ENCODE measurements at regions of chr5 and their contacts with region 1.

Region 1: DNA sequence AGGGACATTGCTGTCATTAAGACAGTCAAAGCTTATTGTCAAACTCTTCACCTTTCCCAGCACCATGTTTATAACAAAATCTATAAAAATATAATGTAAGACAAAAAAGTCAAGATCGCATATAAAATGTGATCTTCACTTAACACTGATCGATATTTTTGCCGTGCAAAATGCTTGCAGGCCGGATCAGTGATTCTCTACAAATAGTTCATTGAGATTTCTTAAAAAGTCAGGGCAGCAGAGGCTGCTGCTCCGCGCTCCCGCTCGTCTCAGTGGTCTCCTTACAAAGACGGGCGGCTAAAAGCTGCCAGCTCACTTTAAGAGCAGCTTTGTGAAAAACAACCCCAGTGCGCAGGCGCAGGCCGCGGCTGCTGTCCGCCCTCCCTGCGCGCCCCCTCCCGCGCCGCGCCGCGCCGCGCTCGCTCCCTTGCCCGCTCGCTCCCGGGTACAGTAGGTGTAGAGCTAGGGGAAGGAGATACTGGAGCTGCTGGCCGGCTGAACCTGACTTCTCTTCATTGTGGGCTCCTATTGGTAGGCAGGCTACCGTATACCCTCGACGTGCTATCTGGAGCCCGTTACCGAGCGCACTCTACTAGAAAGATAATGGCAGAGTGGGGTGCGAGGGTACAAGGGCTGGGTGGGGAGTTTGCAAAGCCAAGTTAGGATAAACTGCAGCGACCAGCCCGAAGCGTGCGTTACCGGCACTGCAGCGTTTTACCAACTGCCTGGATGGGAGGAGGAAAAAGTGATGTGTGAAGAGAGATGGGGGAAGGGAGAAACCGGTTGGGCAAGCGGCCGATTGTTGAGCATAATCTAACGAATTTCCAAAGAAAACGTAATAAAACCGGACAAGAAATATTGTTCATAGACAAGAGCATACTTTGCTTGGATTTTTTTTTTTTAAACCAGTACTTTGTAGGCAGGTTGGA is at the start of gene ARRDC3:
- DNase-seq: peak; percentile 99
- H3K4me3 Mint-ChIP-seq: peak within 1 kb of the TSS; percentile 94
- H3K27ac Mint-ChIP-seq: peak within 1 kb of the TSS; percentile 99
- H3K4me1 Mint-ChIP-seq: peaks cover 24% of the 10 kb centered on the region
- H3K27me3 Mint-ChIP-seq: peaks cover 4% of the 10 kb centered on the region
- total RNA-seq, gene ARRDC3: 12.4 and 13.1 TPM in 2 replicates

Region 2: GRCh38 chr5:90409318-90410177 is 973.7 kb before region 1 on chr5 and contains the start of gene CETN3:
- intact Hi-C with region 1: loop called (anchors 2 kb)
- DNase-seq: peak; percentile 96
- H3K4me3 Mint-ChIP-seq: no peak within 1 kb of the TSS
- H3K27ac Mint-ChIP-seq: no peak within 1 kb of the TSS
- H3K4me1 Mint-ChIP-seq: peaks cover 14% of the 10 kb centered on the region
- H3K27me3 Mint-ChIP-seq: peaks cover 3% of the 10 kb centered on the region
- total RNA-seq, gene CETN3: 39.4 and 40.0 TPM in 2 replicates

Region 3: DNA sequence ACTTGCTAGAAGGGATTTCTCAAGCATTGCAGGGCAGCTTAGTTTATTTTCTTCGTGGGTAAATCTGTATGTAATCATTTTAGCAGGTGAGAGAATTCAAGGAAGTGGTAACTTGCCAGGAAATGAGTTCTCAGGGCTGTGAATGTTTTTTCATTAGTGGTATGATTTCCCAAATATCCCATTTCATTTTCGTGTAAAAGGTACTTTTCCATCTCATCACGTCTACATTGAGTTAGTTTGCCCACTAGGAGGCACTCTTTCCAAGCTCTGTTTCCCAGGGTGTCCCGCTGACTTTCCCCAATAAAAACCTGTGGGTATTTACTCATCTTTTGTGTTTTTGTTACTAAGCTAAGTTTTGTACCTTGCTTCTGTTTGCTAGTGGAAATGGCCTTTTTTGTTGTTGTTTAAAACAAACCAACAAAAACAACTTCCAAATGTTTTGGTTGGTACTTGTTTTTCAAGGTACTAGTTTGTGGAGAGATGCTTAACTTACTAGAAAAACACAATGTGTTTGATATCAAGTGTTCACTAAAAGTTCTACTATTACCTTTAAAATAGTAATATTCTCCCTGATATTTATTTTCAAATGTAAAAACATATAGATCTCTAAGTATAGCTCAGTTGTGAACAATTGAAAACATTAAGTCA is 451.1 kb before region 1 on chr5:
- intact Hi-C with region 1: loop called (anchors 1 kb)
- DNase-seq: peak; percentile 78
- H3K4me3 Mint-ChIP-seq: no peak overlapping the region
- H3K27ac Mint-ChIP-seq: no peak overlapping the region
- H3K4me1 Mint-ChIP-seq: peaks cover 4% of the 10 kb centered on the region
- H3K27me3 Mint-ChIP-seq: no peaks in the 10 kb centered on the region

Region 4: DNA sequence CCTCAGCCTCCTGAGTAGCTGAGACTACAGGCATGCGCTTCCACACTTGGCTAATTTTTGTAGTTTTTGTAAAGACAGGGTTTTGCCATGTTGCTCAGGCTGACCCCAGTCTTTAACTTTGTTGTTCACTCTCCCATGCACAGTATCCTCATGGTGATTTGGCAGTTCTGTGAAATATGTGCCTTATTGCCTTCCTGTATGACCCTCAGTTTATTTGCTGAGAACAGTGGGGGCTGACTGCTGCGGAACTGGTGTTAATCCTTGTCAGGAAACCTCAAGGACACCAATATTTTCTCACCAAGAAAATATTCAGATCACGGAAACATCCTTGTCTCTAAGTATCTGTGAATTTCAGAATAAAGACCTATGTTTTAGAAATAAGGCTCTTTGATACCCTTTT is 288.0 kb before region 1 on chr5:
- intact Hi-C with region 1: no loop called
- DNase-seq: no peak
- H3K4me3 Mint-ChIP-seq: no peak overlapping the region
- H3K27ac Mint-ChIP-seq: no peak overlapping the region
- H3K4me1 Mint-ChIP-seq: no peaks in the 10 kb centered on the region
- H3K27me3 Mint-ChIP-seq: peaks cover 16% of the 10 kb centered on the region

Region 5: GRCh38 chr5:91162534-91163381 is 220.5 kb before region 1 on chr5:
- intact Hi-C with region 1: loop called (anchors 1 kb)
- DNase-seq: peak; percentile 90
- H3K4me3 Mint-ChIP-seq: peak overlapping the region; percentile 63
- H3K27ac Mint-ChIP-seq: peak overlapping the region; percentile 88
- H3K4me1 Mint-ChIP-seq: peaks cover 25% of the 10 kb centered on the region
- H3K27me3 Mint-ChIP-seq: peaks cover 3% of the 10 kb centered on the region

Region 6: GRCh38 chr5:91280362-91281269 is 102.7 kb before region 1 on chr5:
- intact Hi-C with region 1: loop called (anchors 1 kb)
- DNase-seq: peak; percentile 95
- H3K4me3 Mint-ChIP-seq: peak overlapping the region; percentile 85
- H3K27ac Mint-ChIP-seq: peak overlapping the region; percentile 92
- H3K4me1 Mint-ChIP-seq: peaks cover 28% of the 10 kb centered on the region
- H3K27me3 Mint-ChIP-seq: peaks cover 4% of the 10 kb centered on the region

Region 7: DNA sequence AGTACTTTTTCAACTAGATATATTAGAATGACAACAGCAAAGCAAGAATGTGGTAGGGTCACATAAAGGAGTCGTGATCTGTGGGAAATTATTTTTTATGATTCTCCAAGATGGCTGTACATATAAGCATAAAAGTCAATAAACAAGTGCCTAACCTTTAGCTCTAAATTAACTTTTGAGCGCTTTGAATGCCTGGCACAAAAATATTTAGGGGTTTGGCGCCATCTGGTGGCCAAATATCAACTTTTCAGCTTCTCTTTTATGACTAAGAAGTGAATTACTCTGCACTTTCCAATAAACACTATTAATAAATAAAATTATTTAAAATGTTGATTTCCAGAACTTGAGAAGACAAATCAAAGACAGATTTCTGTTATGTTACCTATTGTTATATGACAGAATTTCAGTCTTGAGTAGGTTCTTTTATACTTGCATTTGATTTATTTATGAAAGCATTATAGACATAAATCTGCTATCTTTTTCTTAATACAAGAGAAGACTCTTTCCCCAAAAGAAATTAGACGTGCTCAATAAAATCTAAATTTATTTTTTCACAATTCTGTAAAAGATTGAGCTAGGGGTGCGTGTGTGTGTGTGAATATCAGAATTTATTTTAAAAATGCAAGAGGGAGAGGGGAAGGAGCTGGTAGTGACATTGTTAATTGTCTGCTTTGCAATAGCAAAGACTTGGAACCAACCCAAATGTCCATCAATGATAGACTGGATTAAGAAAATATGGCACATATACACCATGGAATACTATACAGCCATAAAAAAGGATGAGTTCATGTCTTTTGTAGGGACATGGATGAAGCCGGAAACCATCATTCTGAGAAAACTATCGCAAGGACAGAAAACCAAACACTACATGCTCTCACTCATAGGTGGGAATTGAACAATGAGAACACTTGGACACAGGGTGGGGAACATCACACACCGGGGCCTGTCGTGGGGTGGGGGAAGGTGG is 36.6 kb after region 1 on chr5:
- intact Hi-C with region 1: loop called (anchors 2 kb)
- DNase-seq: peak; percentile 88
- H3K4me3 Mint-ChIP-seq: no peak overlapping the region
- H3K27ac Mint-ChIP-seq: no peak overlapping the region
- H3K4me1 Mint-ChIP-seq: no peaks in the 10 kb centered on the region
- H3K27me3 Mint-ChIP-seq: peaks cover 6% of the 10 kb centered on the region

Measured in activated CD4-positive, alpha-beta T cell treated with anti-CD3 and anti-CD28 coated beads, Interleukin-2, amount 10 ng/mL, durations not matched to agents 24 days and 14 days (primary cell).